ENCODE measurements at regions of chr3 and their contacts with region 1.

Region 1: GRCh38 chr3:49786241-49786958 is at the start of gene IP6K1:
- DNase-seq: peak; percentile 100
- H3K4me3 Mint-ChIP-seq: peak within 1 kb of the TSS; percentile 83
- H3K27ac Mint-ChIP-seq: peak within 1 kb of the TSS; percentile 86
- H3K4me1 Mint-ChIP-seq: peaks cover 30% of the 10 kb centered on the region
- H3K27me3 Mint-ChIP-seq: no peaks in the 10 kb centered on the region
- total RNA-seq, gene IP6K1: 18.3 to 20.3 TPM

Region 2: GRCh38 chr3:48765376-48765775 is 1021.0 kb before region 1 on chr3:
- CTCF ChIA-PET with region 1: no interaction called
- intact Hi-C with region 1: no loop called
- DNase-seq: no peak
- H3K4me3 Mint-ChIP-seq: no peak overlapping the region
- H3K27ac Mint-ChIP-seq: no peak overlapping the region
- H3K4me1 Mint-ChIP-seq: no peaks in the 10 kb centered on the region
- H3K27me3 Mint-ChIP-seq: no peaks in the 10 kb centered on the region

Region 3: DNA sequence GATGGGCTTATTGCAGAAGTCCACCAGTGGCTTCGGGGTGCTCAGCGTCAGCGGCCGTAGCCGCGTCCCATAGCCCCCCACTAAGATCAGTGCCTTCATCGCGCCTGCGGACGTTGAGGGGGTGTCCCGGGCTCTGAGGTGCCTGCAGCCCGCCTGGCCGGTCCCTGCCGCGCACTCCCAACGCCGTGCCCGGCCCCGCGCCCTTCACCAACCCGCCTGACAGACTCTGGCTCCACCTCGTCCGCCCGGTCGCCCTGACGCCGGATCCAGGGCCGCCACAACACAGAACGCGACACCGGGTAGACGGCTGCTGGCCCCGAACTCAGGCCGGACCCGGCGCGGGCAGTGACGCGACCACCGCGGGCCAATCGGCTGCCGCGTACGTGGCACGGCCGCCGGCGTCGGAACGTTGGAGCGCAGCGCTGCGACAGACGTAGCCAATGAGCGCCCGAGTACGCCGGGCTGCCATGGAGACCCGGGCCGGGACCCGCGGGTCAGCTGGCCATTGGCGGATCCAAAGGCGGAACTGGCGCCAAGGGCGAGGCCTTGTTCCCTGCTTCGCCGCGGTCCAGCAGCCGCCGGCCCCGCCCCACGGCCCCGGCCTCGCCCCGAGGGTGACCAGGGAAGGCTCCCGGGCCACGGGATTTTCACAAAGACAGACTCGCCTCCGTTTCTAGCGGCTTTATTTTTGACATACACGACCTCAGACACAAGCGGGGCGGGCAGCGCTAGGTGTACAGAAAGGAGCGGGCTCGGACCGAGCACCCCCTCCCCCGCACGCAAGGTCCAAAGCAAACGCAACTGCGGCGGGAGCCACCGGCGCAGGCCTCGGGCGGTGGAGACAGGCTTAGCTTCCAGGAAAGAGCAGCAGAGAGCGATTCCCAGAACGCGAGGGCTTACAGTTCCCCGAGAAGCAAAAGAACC is 62.5 kb before region 1 on chr3 and contains the start of gene GMPPB:
- CTCF ChIA-PET with region 1: interaction called, 4 read pairs
- intact Hi-C with region 1: loop called (anchors 1 kb)
- DNase-seq: peak; percentile 96
- H3K4me3 Mint-ChIP-seq: peak within 1 kb of the TSS; percentile 96
- H3K27ac Mint-ChIP-seq: peak within 1 kb of the TSS; percentile 95
- H3K4me1 Mint-ChIP-seq: peaks cover 33% of the 10 kb centered on the region
- H3K27me3 Mint-ChIP-seq: no peaks in the 10 kb centered on the region
- total RNA-seq, gene GMPPB: 25.6 to 27.4 TPM

Region 4: DNA sequence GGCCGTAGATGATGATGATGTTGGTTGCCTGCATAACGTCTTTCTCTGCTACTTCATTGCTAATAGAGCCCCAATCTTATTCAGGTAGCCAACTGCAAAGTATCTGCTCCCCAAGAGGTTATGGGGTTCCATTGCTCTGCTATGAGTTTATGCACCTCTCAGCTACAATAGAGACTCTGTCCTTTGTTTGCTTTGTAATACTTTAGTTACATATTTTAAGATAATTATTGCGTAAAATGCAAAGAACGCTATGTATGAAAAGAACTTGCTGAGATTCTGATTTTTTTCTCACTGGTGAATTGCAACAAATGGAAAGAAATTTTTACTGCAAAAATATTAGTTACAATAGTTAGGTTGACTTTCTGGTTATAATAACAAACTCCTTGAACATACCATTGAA is 34.9 kb before region 1 on chr3:
- CTCF ChIA-PET with region 1: no interaction called
- intact Hi-C with region 1: no loop called
- DNase-seq: no peak
- H3K4me3 Mint-ChIP-seq: no peak overlapping the region
- H3K27ac Mint-ChIP-seq: no peak overlapping the region
- H3K4me1 Mint-ChIP-seq: peaks cover 19% of the 10 kb centered on the region
- H3K27me3 Mint-ChIP-seq: no peaks in the 10 kb centered on the region

Region 5: DNA sequence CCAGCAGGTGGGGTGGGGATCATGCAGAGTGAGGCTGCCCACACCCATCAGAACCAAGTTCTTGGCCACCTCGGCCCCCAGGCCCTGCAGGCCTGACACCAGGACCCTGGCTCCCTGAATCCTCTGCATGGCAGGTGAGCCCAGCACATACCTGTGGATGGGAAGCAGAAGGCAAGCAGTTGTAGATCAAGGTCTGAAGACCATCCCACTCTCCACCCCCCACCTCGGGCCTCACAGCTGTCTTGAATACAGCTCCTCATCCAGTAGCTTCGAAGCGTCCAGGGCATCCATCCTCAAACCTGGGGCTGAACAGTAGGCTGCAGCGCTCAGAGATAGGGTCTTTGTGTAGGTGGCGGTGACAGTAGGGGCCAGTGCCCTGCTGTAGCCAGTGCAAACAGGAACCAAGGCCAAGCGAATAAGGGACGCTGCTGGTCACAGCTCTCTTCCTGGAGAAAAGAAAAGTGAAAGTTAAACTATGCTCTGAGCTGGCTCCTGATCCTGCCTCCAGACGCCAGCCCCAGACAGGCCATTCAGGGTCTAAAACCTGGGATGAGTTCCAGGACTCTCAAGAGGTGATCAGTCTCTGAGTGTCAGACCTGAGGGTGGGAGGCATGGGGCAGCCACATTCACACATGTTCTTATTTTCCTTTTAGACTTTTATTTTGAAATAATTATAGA is 27.2 kb after region 1 on chr3 and contains the start of gene UBA7:
- CTCF ChIA-PET with region 1: no interaction called
- intact Hi-C with region 1: loop called (anchors 1 kb)
- DNase-seq: peak; percentile 55
- H3K4me3 Mint-ChIP-seq: peak within 1 kb of the TSS; percentile 96
- H3K27ac Mint-ChIP-seq: peak within 1 kb of the TSS; percentile 90
- H3K4me1 Mint-ChIP-seq: peaks cover 18% of the 10 kb centered on the region
- H3K27me3 Mint-ChIP-seq: no peaks in the 10 kb centered on the region
- total RNA-seq, gene UBA7: 93.5 to 97.7 TPM

Region 6: DNA sequence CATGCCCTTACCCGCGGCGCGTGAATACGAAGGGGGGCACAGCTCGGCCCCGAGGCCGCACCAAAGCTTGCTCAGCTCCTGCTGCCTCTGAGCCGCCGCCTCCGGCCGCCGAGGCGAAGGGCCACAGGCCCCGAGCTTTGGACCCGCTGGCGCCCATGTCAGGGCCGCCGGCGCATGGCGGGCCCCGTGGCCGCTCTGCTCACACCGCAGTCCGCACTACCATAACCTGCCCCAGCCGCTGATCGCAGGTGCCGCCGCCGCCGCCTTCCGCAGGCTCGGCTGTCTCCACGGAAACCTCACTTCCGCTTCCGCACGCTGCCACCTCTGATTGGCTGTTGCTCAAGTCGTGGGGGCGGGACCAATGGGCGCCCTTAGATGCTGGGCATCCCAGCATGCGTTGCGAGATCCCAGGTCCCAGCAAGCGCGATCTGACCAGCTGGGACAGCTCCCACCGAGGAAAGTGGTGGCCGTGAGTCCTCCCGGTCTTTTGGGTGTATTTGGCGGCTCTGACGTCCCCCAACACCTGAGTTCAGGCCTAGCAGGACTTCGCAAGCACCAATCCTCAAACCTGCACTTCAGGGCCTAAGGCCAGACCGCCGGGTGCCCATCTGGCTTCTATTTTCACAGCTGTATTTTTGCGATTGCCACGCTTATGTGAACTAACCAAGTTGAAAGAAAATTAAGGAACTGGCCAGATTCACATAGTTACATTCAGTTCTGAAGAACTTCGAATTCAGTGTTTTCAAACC is 541.7 kb after region 1 on chr3 and contains the start of gene TUSC2:
- CTCF ChIA-PET with region 1: no interaction called
- intact Hi-C with region 1: loop called (anchors 1 kb)
- DNase-seq: peak; percentile 98
- H3K4me3 Mint-ChIP-seq: peak within 1 kb of the TSS; percentile 88
- H3K27ac Mint-ChIP-seq: peak within 1 kb of the TSS; percentile 80
- H3K4me1 Mint-ChIP-seq: peaks cover 16% of the 10 kb centered on the region
- H3K27me3 Mint-ChIP-seq: no peaks in the 10 kb centered on the region
- total RNA-seq, gene TUSC2: 14.1 to 14.4 TPM

Measured in activated naive CD4-positive, alpha-beta T cell treated with anti-CD3 and anti-CD28 coated beads for 36 hours (primary cell).